ENCODE measurements at regions of chr9 and their contacts with region 1.

Region 1: DNA sequence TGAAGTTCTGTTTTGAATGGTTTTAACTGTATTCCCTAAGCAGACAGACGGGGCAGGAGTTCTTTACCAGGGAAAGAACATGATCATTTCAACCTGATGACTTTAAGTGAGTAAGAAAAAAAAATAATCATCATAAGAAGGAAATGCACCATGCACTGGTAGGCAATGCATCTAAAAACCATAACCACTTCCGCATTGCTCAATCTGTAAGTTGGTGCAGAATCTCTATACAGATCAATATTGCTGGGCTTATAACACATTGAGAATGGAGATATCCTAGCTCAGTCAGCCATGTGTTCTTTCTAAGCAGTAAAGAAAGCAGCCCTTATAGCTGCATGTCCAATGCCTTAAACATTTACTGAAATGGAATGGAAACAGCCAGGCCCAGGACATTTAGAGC is 407.1 kb upstream of the DMAC1 start:
- DNase-seq: no peak
- H3K4me3 ChIP-seq: no peak overlapping the region
- H3K27ac ChIP-seq: no peak overlapping the region
- H3K4me1 ChIP-seq: no peaks in the 10 kb centered on the region
- H3K27me3 ChIP-seq: no peaks in the 10 kb centered on the region
- CTCF ChIP-seq: no peak

Region 2: GRCh38 chr9:8168916-8169438 is 37.7 kb before region 1 on chr9:
- CTCF ChIA-PET with region 1: interaction called, 12 read pairs
- POLR2A ChIA-PET with region 1: no interaction called
- intact Hi-C with region 1: no loop called
- DNase-seq: no peak
- H3K4me3 ChIP-seq: no peak overlapping the region
- H3K27ac ChIP-seq: no peak overlapping the region
- H3K4me1 ChIP-seq: no peaks in the 10 kb centered on the region
- H3K27me3 ChIP-seq: no peaks in the 10 kb centered on the region
- CTCF ChIP-seq: no peak

Region 3: DNA sequence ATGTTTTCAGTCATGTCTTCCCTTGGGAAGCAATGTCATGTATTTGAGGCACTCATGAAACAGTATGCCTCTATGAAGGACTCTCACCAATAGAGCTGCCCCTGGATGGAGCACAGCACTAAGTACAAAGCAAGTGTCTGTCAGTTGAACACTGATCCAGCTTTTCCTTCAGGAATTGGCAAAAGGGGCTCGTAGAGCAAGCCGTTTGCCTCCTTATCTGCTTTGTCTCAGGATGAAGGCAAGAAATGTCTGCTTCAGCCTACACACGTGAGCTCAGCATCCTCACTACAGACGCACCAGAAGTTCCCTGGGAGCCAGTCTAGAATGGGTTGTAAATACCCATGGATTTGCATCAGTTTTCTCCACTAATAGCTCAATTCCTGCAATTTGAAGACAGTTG is 335.8 kb after region 1 on chr9:
- CTCF ChIA-PET with region 1: no interaction called
- POLR2A ChIA-PET with region 1: no interaction called
- intact Hi-C with region 1: no loop called
- DNase-seq: no peak
- H3K4me3 ChIP-seq: no peak overlapping the region
- H3K27ac ChIP-seq: no peak overlapping the region
- H3K4me1 ChIP-seq: no peaks in the 10 kb centered on the region
- H3K27me3 ChIP-seq: no peaks in the 10 kb centered on the region
- CTCF ChIP-seq: no peak